ENCODE measurements at regions of chr4 and their contacts with region 1.

Region 1: GRCh38 chr4:181548873-181549575 is 694.2 kb upstream of the TENM3 start:
- DNase-seq: no peak
- H3K4me3 ChIP-seq: no peak overlapping the region
- H3K27ac ChIP-seq: no peak overlapping the region
- H3K4me1 ChIP-seq: no peaks in the 10 kb centered on the region
- H3K27me3 ChIP-seq: no peaks in the 10 kb centered on the region
- CTCF ChIP-seq: no peak
- EP300 ChIP-seq: no peak
- POLR2A ChIP-seq: no peak

Region 2: DNA sequence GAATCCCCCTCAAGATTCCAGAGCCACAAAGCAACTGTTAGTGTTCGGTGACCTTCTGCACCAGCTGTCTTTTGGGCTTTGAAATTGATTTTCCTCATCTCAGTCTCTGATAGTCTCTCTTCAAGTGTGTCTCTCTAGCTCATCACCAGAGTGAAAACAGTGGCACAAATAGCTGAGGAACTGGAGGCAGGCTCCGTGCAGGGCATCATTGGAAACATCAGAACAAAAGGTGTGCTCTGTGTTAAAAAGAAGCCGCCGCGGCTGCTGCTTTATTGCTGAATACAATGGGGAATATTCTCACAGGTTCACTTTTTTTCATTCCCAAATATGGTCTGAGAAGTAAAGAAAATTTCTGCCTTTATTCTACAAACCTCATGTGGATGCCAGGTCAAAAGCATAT is 1070.6 kb after region 1 on chr4:
- intact Hi-C with region 1: loop called in 1 of 4 experiments (anchors 10 kb)
- DNase-seq: no peak
- H3K4me3 ChIP-seq: no peak overlapping the region
- H3K27ac ChIP-seq: no peak overlapping the region
- H3K4me1 ChIP-seq: no peaks in the 10 kb centered on the region
- H3K27me3 ChIP-seq: no peaks in the 10 kb centered on the region
- CTCF ChIP-seq: no peak
- EP300 ChIP-seq: no peak
- POLR2A ChIP-seq: no peak

Measured in ovary (tissue), 10 donors.